Activated B cell treated with CpG ODN at 0.5 μM for 24 hours (primary cell): ENCODE measurements at regions of chr1 and their contacts with region 1.

Region 1: DNA sequence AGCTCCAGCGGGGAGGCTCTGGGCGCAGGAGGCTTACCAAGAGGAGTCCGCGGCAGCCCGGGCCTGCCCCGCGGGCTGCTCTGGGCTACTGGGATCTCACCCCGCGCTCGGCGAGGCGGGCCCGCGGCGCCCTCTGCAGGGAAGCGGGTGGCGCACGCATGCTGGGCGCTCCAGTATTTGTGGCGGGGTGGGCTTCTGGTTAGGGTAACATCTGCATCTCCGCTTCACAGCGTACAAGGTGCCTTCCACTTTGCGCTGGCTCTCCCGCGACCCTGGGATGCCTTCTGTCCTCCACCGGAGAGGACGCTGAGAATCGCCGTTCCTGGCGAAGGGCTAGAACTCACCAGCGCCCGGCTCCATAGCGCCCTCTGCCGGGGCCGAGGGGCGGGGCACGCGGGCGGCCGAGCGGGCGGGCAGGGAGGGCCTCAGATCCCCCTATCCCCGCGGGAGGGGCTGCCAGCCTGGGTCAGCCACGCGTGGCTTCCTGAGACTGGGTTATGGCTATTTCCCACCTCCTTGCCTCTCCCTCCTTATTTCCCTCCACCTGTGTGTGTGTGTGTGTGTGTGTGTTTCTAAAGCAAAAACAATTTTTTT is 46.6 kb upstream of the CTBS start:
- DNase-seq: peak; percentile 91
- ATAC-seq: peak; percentile 93
- H3K4me3 Mint-ChIP-seq: peak overlapping the region; percentile 95
- H3K27ac Mint-ChIP-seq: peak overlapping the region; percentile 82
- H3K4me1 Mint-ChIP-seq: peaks cover 2% of the 10 kb centered on the region
- H3K27me3 Mint-ChIP-seq: peaks cover 8% of the 10 kb centered on the region
- CTCF ChIP-seq: peak; percentile 99

Region 2: GRCh38 chr1:84298328-84298683 is 322.5 kb before region 1 on chr1:
- CTCF ChIA-PET with region 1: no interaction called
- POLR2A ChIA-PET with region 1: no interaction called
- intact Hi-C with region 1: loop called (anchors 2 kb)
- DNase-seq: peak; percentile 58
- ATAC-seq: peak; percentile 91
- H3K4me3 Mint-ChIP-seq: peak overlapping the region; percentile 90
- H3K27ac Mint-ChIP-seq: peak overlapping the region; percentile 74
- H3K4me1 Mint-ChIP-seq: peaks cover 34% of the 10 kb centered on the region
- H3K27me3 Mint-ChIP-seq: peaks cover 8% of the 10 kb centered on the region
- CTCF ChIP-seq: no peak

Region 3: DNA sequence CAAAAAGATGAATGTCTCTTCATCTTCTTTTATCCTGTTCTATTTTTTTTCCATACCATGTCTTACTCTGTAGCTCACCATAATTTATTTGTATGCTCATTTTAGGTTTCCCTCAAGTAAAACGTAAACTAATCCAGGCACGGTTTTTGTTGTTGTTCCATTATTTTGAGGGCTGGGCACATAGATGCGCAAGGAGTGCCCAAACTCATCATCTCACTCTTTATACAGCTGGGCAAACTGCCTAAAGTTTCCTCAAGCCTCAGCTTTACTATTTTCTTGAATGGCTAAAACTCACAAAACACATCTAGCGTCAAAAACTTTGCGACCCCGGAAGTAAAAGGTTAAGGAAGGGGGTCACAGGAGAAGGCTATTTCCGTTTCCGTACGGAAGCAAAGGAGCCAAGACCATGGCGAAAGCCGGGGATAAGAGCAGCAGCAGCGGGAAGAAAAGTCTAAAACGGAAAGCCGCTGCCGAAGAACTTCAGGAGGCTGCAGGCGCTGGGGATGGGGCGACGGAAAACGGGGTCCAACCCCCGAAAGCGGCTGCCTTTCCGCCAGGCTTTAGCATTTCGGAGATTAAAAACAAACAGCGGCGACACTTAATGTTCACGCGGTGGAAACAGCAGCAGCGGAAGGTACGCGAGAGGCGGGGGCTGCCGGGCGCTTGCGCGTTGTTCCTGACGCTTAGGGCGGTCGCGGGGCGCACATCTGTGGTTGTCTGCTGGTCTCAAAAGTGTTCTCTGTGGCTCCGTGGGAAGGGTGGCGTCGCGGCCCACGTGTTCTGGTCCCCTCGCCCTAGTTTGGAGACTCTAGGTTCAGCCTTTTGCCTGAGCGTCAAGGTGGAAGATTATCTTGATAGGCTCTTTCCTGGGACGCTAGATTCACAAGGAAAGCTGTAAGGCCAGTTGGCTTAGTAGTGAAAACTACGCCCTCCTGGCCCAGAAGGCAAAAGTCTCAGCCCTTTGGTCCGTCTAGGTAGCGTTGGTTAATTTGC is 141.6 kb before region 1 on chr1 and contains the start of gene RPF1:
- CTCF ChIA-PET with region 1: interaction called, 3 read pairs
- POLR2A ChIA-PET with region 1: no interaction called
- intact Hi-C with region 1: loop called (anchors 1 kb)
- DNase-seq: peak; percentile 64
- ATAC-seq: peak; percentile 96
- H3K4me3 Mint-ChIP-seq: peak within 1 kb of the TSS; percentile 97
- H3K27ac Mint-ChIP-seq: peak within 1 kb of the TSS; percentile 97
- H3K4me1 Mint-ChIP-seq: peaks cover 37% of the 10 kb centered on the region
- H3K27me3 Mint-ChIP-seq: peaks cover 21% of the 10 kb centered on the region
- CTCF ChIP-seq: no peak
- total RNA-seq, gene RPF1: 42.8 and 46.3 TPM in 2 replicates

Region 4: DNA sequence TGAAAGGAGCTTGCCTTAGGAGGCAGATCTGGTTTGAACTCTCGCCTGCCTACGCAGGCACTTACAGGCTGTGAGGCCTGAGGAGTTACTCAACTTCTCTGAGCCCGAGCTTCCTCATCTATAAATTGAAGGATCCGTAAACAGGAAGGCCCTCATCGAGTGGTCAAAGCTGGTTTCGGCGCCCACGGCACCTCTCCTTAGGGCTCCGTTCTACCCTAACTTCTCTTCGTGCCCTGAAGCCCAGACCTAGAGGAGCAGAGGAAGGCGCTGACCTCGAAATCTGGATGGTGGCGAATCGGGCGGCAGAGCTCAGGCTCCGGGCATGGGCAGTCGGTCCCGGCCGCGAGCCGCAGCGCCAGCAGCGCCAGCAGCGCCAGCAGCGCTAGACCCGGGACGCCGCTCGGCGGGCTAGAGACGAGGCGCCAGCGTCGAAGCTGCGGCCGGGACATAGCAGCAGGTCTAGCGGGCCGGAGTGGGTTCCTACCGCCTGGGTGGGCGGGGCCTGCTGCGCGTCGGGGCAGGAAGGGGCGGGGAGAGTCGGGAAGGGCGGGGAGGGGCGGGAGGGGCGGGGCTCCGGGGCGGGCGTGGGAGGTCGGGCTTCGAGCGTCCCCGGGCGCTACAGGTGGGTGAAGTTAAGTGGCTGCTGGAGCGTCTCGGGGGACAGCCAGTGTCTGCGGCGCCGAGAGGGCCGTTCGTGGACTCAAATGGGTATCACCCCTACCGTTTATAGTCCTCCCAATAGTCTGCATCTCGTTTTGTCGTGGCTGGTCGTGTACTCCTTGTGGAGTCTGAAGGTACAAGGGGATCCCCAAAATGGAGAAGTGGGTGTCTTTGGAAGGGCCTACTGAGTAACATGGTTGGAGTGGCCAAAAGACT is 46.6 kb before region 1 on chr1 and contains the start of gene CTBS:
- CTCF ChIA-PET with region 1: interaction called, 16 read pairs
- POLR2A ChIA-PET with region 1: interaction called, 16 read pairs
- intact Hi-C with region 1: loop called (anchors 1 kb)
- DNase-seq: peak; percentile 81
- ATAC-seq: peak; percentile 91
- H3K4me3 Mint-ChIP-seq: peak within 1 kb of the TSS; percentile 96
- H3K27ac Mint-ChIP-seq: peak within 1 kb of the TSS; percentile 99
- H3K4me1 Mint-ChIP-seq: peaks cover 40% of the 10 kb centered on the region
- H3K27me3 Mint-ChIP-seq: no peaks in the 10 kb centered on the region
- CTCF ChIP-seq: no peak
- total RNA-seq, gene CTBS: 11.8 and 13.2 TPM in 2 replicates

Region 5: DNA sequence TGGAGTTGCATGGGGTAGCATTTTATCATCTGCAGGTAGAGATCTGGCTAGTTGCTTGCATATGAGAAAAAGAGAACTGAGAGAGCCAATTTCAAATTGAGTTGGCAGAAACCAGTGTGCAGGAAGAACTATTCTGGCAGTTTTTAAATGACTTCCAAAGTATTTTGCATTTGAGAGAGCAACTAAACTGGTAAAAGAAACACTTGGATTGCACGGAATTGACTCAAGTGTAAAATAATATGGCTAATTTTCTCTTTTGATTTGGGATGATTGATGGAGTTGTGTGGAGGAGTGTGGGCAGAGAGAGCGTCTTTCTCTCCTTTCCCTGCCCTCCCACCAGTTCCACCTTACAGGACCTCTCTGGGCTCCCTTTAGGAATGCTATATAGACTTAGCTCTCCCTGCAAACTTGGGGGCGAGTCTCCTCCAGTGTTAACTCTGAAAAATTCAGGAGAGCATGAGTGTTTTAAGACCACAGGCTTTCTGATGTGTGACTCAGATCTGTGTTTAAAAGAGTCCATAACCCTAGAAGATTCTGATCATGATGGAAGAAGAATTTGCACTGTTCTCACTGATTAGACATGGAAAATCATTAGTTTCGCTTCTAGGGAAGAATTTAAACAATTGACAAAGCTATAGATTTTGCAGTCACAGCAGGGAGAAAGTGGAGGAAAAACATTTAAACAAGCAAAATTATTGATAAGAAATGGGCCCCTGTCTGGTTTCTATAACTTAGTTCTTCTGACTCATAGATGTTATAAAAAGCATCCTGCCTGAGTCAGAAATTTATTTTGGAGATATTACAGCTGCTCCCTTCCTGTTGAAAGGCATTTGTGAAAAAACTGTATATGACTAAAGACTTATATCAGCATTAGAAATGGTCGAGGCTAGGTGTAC is 21.7 kb before region 1 on chr1:
- CTCF ChIA-PET with region 1: interaction called, 3 read pairs
- POLR2A ChIA-PET with region 1: no interaction called
- intact Hi-C with region 1: loop called (anchors 1 kb)
- DNase-seq: no peak
- ATAC-seq: peak; percentile 63
- H3K4me3 Mint-ChIP-seq: peak overlapping the region; percentile 53
- H3K27ac Mint-ChIP-seq: peak overlapping the region; percentile 88
- H3K4me1 Mint-ChIP-seq: peaks cover 17% of the 10 kb centered on the region
- H3K27me3 Mint-ChIP-seq: no peaks in the 10 kb centered on the region
- CTCF ChIP-seq: no peak

Region 6: DNA sequence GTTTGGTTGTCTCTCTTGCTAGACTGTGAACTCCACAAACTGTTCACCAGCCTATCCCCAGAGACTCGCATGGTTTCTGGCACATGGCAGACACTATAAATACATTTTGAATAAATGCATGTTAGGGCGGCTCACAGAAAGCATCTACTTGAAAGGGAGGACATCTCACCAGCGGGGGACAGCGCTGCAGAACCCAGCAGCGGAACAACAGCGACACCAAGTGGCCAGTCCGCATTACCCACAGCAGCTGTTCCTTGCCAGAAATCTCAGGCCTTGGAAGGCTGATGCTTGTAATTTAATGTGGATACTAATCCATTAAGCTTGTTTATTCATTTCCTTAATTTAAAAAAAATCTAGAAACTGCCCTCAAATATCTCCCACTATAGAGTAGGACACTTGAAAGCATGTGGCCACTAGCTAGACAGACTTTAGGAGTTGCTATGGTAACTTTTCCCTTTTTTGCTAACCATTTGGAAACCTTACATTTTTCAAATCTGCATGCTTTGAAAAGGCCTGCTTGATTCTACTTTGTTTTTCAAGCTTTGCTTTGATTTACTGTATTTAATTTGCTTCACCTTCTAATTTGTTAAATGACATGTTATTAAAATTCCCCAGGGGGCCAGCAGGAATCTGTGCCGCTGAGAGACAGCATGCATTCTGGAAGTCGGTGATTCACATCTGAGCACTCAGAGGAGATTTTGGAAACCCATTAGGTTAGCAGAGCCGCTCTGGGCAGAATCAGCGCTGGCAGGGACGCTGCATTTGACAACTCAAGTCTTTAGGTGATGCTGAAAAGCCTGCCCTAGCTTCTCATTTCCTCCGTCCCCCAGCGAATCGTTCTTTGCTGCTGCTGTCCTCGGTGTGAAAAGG is 132.9 kb after region 1 on chr1:
- CTCF ChIA-PET with region 1: interaction called, 4 read pairs
- POLR2A ChIA-PET with region 1: no interaction called
- intact Hi-C with region 1: loop called (anchors 1 kb)
- DNase-seq: peak; percentile 34
- ATAC-seq: peak; percentile 81
- H3K4me3 Mint-ChIP-seq: no peak overlapping the region
- H3K27ac Mint-ChIP-seq: no peak overlapping the region
- H3K4me1 Mint-ChIP-seq: peaks cover 4% of the 10 kb centered on the region
- H3K27me3 Mint-ChIP-seq: peaks cover 22% of the 10 kb centered on the region
- CTCF ChIP-seq: peak; percentile 51

Region 7: DNA sequence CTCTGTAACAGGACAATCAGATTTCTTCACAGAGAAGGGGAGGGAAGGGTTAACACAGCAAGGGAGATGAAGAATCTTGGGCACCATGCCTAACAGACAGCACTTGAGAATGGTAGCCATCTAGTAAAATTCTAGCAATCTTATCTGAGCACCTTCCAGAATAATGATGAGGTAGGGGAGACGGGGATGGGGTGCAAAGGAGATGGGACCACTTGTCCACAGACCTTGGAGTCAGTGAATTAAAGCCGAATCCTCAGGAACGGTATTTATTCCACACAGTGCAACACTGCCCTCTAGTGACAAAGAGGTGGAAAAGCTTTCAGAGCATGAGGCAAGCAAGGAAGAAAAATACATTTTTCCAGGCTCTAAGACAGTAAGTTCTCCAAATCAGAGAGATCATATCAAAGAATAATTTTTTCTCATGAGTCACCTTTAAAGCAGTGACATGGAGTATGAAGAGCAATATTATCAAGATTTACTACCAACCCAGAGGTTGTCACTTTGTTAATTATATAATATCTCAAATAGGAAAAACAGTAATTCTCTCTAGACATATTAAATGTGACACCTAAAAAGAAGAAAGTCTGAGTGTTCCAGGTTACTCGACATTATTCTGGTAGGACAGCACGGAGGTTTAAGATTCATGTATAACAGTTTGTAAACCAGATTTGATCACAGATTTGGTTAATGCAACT is 315.4 kb after region 1 on chr1:
- CTCF ChIA-PET with region 1: no interaction called
- POLR2A ChIA-PET with region 1: no interaction called
- intact Hi-C with region 1: loop called (anchors 5 kb)
- DNase-seq: no peak
- ATAC-seq: peak; percentile 70
- H3K4me3 Mint-ChIP-seq: no peak overlapping the region
- H3K27ac Mint-ChIP-seq: no peak overlapping the region
- H3K4me1 Mint-ChIP-seq: peaks cover 4% of the 10 kb centered on the region
- H3K27me3 Mint-ChIP-seq: no peaks in the 10 kb centered on the region
- CTCF ChIP-seq: peak; percentile 99